ENCODE measurements at regions of chr13 and their contacts with region 1.

Region 1: GRCh38 chr13:46184277-46184699 is 2.3 kb upstream of the LCP1 start:
- DNase-seq: peak; percentile 77 to 81 (median 80)
- H3K4me3 ChIP-seq: peak overlapping the region in 1 of 2 donors; percentile 21
- H3K4me3 Mint-ChIP-seq: peak overlapping the region; percentile 67 to 98 (median 98)
- H3K27ac ChIP-seq: peak overlapping the region; percentile 89
- H3K27ac Mint-ChIP-seq: peak overlapping the region; percentile 90 to 99 (median 96)
- H3K4me1 ChIP-seq: peaks cover 36% of the 10 kb centered on the region
- H3K4me1 Mint-ChIP-seq: peaks cover 34 to 50% (median 39%) of the 10 kb centered on the region in 4 donors
- H3K27me3 ChIP-seq: no peaks in the 10 kb centered on the region
- H3K27me3 Mint-ChIP-seq: no peaks in the 10 kb centered on the region

Region 2: GRCh38 chr13:46052319-46053161 is 131.7 kb before region 1 on chr13 and contains the start of gene ZC3H13:
- CTCF ChIA-PET with region 1: no interaction called
- POLR2A ChIA-PET with region 1: interaction called, 6 read pairs
- intact Hi-C with region 1: loop called (anchors 5 kb)
- DNase-seq: peak; percentile 91 to 97 (median 93)
- H3K4me3 ChIP-seq: peak within 1 kb of the TSS; percentile 59 to 88
- H3K4me3 Mint-ChIP-seq: peak within 1 kb of the TSS; percentile 88 to 99 (median 95)
- H3K27ac ChIP-seq: peak within 1 kb of the TSS; percentile 95
- H3K27ac Mint-ChIP-seq: peak within 1 kb of the TSS; percentile 93 to 99 (median 98)
- H3K4me1 ChIP-seq: peaks cover 38% of the 10 kb centered on the region
- H3K4me1 Mint-ChIP-seq: peaks cover 28 to 49% (median 37%) of the 10 kb centered on the region in 4 donors
- H3K27me3 ChIP-seq: peaks cover 4% of the 10 kb centered on the region
- H3K27me3 Mint-ChIP-seq: peaks cover 7 to 14% of the 10 kb centered on the region in 2 donors
- total RNA-seq, gene ZC3H13: 55.1 to 65.5 TPM

Region 3: DNA sequence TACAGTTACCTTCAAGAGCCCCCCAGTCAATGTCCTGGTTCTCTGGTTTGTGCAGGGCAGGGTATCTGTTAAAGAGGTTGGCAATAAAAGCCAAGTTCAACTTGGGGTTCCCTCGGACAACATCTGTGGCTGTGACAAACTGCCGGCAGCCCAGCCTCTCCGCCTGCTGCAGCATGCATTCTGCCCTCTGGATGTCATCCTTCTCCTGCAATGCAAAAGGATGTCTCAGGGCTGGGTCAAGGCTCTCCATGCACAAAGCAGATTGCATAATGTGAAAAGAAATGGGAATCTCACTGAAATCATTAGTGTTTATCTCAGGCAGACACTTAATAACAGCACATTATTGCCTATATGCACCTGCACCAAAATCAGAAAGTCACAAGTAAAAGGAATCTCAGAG is 37.4 kb before region 1 on chr13:
- CTCF ChIA-PET with region 1: interaction called, 3 read pairs
- POLR2A ChIA-PET with region 1: interaction called, 3 read pairs
- intact Hi-C with region 1: loop called (anchors 5 kb)
- DNase-seq: no peak
- H3K4me3 ChIP-seq: no peak overlapping the region
- H3K4me3 Mint-ChIP-seq: no peak overlapping the region
- H3K27ac ChIP-seq: no peak overlapping the region
- H3K27ac Mint-ChIP-seq: peak overlapping the region in 4 of 7 donors; percentile 42 to 64 (median 53)
- H3K4me1 ChIP-seq: peaks cover 7% of the 10 kb centered on the region
- H3K4me1 Mint-ChIP-seq: peaks cover 22 to 36% (median 27%) of the 10 kb centered on the region in 4 donors
- H3K27me3 ChIP-seq: no peaks in the 10 kb centered on the region
- H3K27me3 Mint-ChIP-seq: no peaks in the 10 kb centered on the region

Region 4: GRCh38 chr13:46168341-46168740 is 15.9 kb before region 1 on chr13:
- CTCF ChIA-PET with region 1: interaction called, 53 read pairs
- POLR2A ChIA-PET with region 1: interaction called, 288 read pairs
- intact Hi-C with region 1: loop called (anchors 1 kb)
- DNase-seq: peak in 1 of 5 donors; percentile 81
- H3K4me3 ChIP-seq: peak overlapping the region; percentile 9 to 38
- H3K4me3 Mint-ChIP-seq: peak overlapping the region; percentile 62 to 92 (median 84)
- H3K27ac ChIP-seq: peak overlapping the region; percentile 74
- H3K27ac Mint-ChIP-seq: peak overlapping the region; percentile 85 to 99 (median 95)
- H3K4me1 ChIP-seq: peaks cover 99% of the 10 kb centered on the region
- H3K4me1 Mint-ChIP-seq: peaks cover 72 to 96% (median 85%) of the 10 kb centered on the region in 4 donors
- H3K27me3 ChIP-seq: no peaks in the 10 kb centered on the region
- H3K27me3 Mint-ChIP-seq: no peaks in the 10 kb centered on the region

Region 5: GRCh38 chr13:46211483-46212351 is 27.4 kb after region 1 on chr13 and contains the start of gene LRRC63:
- CTCF ChIA-PET with region 1: interaction called, 9 read pairs
- POLR2A ChIA-PET with region 1: interaction called, 17 read pairs
- intact Hi-C with region 1: loop called (anchors 1 kb)
- DNase-seq: peak; percentile 80 to 85 (median 84)
- H3K4me3 ChIP-seq: peak within 1 kb of the TSS; percentile 49 to 56
- H3K4me3 Mint-ChIP-seq: peak within 1 kb of the TSS; percentile 85 to 97 (median 94)
- H3K27ac ChIP-seq: peak within 1 kb of the TSS; percentile 75
- H3K27ac Mint-ChIP-seq: peak within 1 kb of the TSS; percentile 83 to 97 (median 96)
- H3K4me1 ChIP-seq: peaks cover 18% of the 10 kb centered on the region
- H3K4me1 Mint-ChIP-seq: peaks cover 9 to 30% (median 18%) of the 10 kb centered on the region in 4 donors
- H3K27me3 ChIP-seq: no peaks in the 10 kb centered on the region
- H3K27me3 Mint-ChIP-seq: no peaks in the 10 kb centered on the region
- total RNA-seq, gene LRRC63: 0.49 to 0.75 TPM

Region 6: GRCh38 chr13:46295491-46296114 is 111.3 kb after region 1 on chr13:
- CTCF ChIA-PET with region 1: interaction called, 5 read pairs
- POLR2A ChIA-PET with region 1: interaction called, 51 read pairs
- intact Hi-C with region 1: no loop called
- DNase-seq: peak; percentile 85 to 91 (median 86)
- H3K4me3 ChIP-seq: peak overlapping the region in 1 of 2 donors; percentile 26
- H3K4me3 Mint-ChIP-seq: peak overlapping the region; percentile 43 to 85 (median 75)
- H3K27ac ChIP-seq: peak overlapping the region; percentile 57
- H3K27ac Mint-ChIP-seq: peak overlapping the region; percentile 87 to 99 (median 96)
- H3K4me1 ChIP-seq: peaks cover 45% of the 10 kb centered on the region
- H3K4me1 Mint-ChIP-seq: peaks cover 38 to 65% (median 50%) of the 10 kb centered on the region in 4 donors
- H3K27me3 ChIP-seq: no peaks in the 10 kb centered on the region
- H3K27me3 Mint-ChIP-seq: no peaks in the 10 kb centered on the region

Measured in CD4-positive, alpha-beta memory T cell (primary cell).